A673 (cell line): ENCODE measurements at regions of chr14 and their contacts with region 1.

Region 1: DNA sequence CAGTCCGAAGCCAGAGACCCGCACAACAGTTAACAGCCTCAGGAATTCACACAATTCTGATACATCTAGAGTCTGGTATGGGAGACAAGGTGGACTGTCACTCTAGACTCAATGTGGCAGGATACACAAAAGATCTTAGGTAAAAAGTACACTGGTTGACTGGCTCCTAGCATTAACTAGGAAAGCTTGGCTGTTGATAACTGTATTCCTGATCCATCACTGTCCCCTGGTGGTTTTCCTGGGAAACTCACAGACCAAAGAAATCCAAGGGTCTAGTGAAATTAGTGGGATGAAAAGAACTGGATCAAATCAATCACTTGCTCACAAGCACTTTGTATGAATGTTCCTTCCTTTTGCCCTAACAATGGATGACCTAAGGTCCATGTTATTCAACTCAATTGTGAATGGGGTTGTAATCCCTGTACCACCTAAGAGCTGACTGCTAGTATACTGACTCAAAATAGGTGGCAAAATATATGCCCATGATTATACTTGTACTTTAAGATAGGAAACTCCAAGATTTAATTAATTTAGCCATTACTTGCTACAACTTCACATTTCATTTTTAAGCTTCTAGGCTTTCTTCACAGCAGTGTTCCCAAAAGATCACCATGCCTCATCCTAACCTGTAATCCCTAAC is 14.0 kb downstream of the NPC2 start:
- DNase-seq: peak; percentile 21
- H3K4me3 ChIP-seq: no peak overlapping the region
- H3K27ac ChIP-seq: no peak overlapping the region
- H3K4me1 ChIP-seq: no peaks in the 10 kb centered on the region
- H3K27me3 ChIP-seq: no peaks in the 10 kb centered on the region
- CTCF ChIP-seq: peak; percentile 55

Region 2: DNA sequence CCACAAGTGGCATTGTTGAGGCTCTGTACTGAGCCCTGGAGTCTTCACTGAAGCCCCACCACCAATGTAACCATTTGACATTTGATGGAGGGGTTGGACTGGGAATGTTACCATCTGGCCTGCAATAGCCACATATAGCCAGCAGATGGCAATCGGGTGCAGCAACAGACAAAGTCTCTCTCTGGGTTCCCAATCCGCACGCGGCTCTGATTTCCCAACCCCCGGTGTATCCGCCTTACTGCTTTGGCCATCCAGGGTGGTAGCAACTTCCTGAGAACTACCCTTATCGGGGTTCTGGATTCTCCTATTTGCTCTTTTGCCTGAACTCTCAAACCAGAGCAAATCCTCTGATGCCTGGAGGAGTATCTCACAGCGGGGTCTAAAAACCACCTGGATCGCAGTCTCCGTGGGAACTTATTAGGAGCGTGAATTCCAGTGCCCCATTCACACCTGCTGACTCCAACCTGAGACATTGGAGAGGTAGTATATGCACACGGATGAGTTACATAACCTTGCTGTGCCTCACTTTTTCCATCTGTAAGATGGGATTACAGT is 116.7 kb before region 1 on chr14:
- CTCF ChIA-PET with region 1: no interaction called
- POLR2A ChIA-PET with region 1: no interaction called
- intact Hi-C with region 1: loop called (anchors 2 kb)
- DNase-seq: peak; percentile 84
- H3K4me3 ChIP-seq: no peak overlapping the region
- H3K27ac ChIP-seq: no peak overlapping the region
- H3K4me1 ChIP-seq: no peaks in the 10 kb centered on the region
- H3K27me3 ChIP-seq: peaks cover 9% of the 10 kb centered on the region
- CTCF ChIP-seq: peak; percentile 91

Region 3: DNA sequence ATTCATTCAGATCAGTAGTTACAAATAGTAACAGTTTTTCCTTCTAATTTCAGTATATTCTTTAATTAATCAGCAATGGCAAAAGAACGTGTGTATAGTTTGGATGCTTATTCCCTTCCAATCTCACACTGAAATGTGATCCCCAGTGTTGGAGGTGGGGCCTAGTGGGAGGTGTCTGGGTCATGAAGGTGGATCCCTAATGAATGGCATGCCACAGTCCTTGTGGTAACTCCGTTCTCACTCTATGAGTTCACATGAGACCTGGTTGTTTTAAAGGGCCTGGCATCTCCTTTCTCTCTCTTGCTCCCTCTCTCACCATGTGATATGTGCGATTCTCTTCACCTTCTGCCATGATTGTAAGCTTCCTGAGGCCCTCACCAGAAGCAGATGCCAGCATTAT is 34.2 kb before region 1 on chr14:
- CTCF ChIA-PET with region 1: no interaction called
- POLR2A ChIA-PET with region 1: no interaction called
- intact Hi-C with region 1: no loop called
- DNase-seq: no peak
- H3K4me3 ChIP-seq: no peak overlapping the region
- H3K27ac ChIP-seq: no peak overlapping the region
- H3K4me1 ChIP-seq: no peaks in the 10 kb centered on the region
- H3K27me3 ChIP-seq: peaks cover 24% of the 10 kb centered on the region
- CTCF ChIP-seq: no peak

Region 4: DNA sequence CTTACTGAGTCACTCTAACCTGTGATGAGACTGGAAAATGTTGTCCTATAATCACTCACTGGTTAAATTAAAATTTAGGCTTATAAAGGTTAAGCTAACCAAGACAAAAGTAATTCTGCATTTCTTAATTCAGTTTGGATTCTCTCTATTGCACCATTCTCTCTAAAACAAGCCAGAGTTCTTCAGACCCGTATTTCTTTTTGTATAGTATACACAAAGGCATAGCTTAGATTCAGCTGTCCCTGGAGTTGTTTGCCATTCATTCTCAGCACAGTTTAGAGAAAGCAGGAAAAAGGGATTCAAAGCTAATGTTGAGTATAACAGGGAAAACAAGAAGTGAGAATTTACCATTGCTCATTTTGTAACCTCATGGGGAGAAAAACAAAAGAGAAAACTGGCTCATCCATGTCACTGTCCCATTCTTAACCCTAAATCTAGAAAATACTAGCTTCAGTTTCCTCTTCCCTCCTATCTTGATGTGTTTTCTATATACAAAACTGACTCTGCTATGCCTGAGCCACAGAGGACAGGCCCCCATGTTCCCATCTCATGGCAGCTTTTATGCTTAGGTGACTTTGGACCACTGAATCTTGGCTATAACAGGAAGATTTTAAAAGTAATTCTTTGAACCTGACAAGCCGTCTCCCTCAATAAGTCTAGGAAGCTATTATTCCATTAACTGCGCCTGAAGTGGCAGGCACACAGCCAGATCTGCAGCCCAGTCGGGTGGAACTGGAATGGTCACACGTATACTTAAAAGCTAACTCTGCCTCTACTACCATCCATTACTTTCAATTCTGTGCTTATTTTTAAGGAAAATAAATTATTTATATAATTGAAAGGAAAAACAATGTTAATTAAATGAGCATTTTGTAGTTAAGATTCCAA is 226.7 kb after region 1 on chr14:
- CTCF ChIA-PET with region 1: no interaction called
- POLR2A ChIA-PET with region 1: no interaction called
- intact Hi-C with region 1: no loop called
- DNase-seq: peak; percentile 44
- H3K4me3 ChIP-seq: no peak overlapping the region
- H3K27ac ChIP-seq: no peak overlapping the region
- H3K4me1 ChIP-seq: peaks cover 5% of the 10 kb centered on the region
- H3K27me3 ChIP-seq: no peaks in the 10 kb centered on the region
- CTCF ChIP-seq: no peak